HCT116 (cell line): ENCODE measurements at regions of chr9 and their contacts with region 1.

Region 1: GRCh38 chr9:134175808-134176598 is 11.6 kb upstream of the RNU6ATAC start:
- DNase-seq: no peak
- ATAC-seq: no peak
- H3K4me3 ChIP-seq: no peak overlapping the region
- H3K27ac ChIP-seq: no peak overlapping the region; the same call in 1 of the 2 replicates
- H3K4me1 ChIP-seq: peaks cover 8 to 11% of the 10 kb centered on the region in 2 experiments
- H3K27me3 ChIP-seq: no peaks in the 10 kb centered on the region
- CTCF ChIP-seq: no peak
- POLR2A ChIP-seq: no peak
- RAD21 ChIP-seq: no peak

Region 2: DNA sequence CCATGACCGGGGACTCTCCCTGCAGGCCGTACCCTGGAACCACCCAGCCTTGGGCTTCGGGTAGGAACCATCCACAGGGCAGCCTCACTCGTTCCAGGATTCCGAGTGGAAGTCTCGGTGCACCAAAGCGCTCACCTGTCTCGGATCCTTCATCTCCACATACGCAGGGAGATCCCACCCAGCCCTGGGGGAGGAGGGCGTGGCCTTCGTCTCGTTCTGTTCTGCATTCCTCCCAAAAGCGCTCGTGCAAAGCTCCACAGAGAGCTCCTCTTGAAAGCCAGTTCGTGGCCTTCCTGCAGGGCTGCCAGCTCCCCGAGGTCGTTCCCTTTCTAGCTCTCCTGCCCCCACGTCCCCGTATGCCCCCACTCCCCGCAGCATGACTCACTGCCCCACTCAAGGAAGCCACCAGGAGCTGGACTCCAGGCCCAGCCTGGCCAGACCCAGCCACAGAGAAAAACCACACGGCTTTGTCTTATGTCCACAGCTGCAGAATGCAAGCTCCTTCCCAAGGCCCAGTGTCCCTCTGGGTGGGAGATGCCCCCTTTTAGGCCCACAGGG is 372.9 kb before region 1 on chr9:
- CTCF ChIA-PET with region 1: no interaction called
- POLR2A ChIA-PET with region 1: no interaction called
- RAD21 ChIA-PET with region 1: no interaction called
- intact Hi-C with region 1: no loop called
- DNase-seq: no peak
- ATAC-seq: no peak
- H3K4me3 ChIP-seq: no peak overlapping the region
- H3K27ac ChIP-seq: no peak overlapping the region
- H3K4me1 ChIP-seq: no peaks in the 10 kb centered on the region
- H3K27me3 ChIP-seq: no peaks in the 10 kb centered on the region
- CTCF ChIP-seq: no peak
- POLR2A ChIP-seq: no peak
- RAD21 ChIP-seq: no peak

Region 3: DNA sequence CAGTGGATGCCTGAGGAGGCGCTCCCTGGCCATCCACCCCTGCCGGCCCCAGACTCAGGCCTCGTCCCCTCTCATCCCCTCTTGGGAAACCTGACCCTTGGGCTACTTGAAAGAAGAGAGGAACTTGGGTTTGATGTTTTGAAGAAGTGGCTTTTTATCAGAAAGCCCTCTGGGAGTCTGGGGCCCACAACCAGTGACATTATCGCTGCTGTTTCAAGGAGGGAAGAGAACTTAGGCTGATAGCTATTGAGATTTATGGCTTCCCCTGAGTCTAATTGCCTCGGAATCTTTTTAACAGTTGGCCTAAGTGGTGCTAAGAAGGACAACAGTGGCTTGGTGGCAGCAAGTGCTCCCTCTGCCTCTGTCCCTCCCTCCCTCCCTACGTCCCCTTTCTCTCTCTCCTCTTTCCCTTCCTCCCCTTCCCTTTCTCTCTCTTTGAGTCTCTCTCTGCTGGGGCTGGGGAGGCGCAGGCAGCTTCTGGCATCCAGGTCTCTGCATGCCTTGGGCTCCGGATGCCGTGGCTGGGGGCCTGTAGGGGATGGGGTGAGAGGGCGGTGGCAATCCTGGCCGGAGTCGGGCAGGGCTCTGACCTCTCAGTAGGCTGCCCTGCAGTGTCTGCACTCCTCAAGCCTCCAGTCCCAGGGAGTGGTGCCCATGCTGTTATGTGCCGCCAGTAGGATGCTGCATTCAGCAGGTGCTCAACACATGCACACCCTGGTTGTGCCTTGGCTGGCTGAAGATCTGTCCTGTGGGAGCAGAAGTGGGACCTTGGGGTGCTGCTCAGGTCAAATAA is 100.6 kb after region 1 on chr9:
- CTCF ChIA-PET with region 1: no interaction called
- POLR2A ChIA-PET with region 1: no interaction called
- RAD21 ChIA-PET with region 1: no interaction called
- intact Hi-C with region 1: no loop called
- DNase-seq: no peak
- ATAC-seq: no peak
- H3K4me3 ChIP-seq: no peak overlapping the region
- H3K27ac ChIP-seq: no peak overlapping the region
- H3K4me1 ChIP-seq: no peaks in the 10 kb centered on the region
- H3K27me3 ChIP-seq: no peaks in the 10 kb centered on the region
- CTCF ChIP-seq: no peak
- POLR2A ChIP-seq: no peak
- RAD21 ChIP-seq: no peak

Region 4: GRCh38 chr9:134323741-134324358 is 147.8 kb after region 1 on chr9:
- CTCF ChIA-PET with region 1: no interaction called
- POLR2A ChIA-PET with region 1: no interaction called
- RAD21 ChIA-PET with region 1: no interaction called
- intact Hi-C with region 1: loop called (anchors 5 kb)
- DNase-seq: peak; percentile 51
- ATAC-seq: peak; percentile 37
- H3K4me3 ChIP-seq: peak overlapping the region; percentile 9 to 80; a peak in 3 of 4 replicates
- H3K27ac ChIP-seq: peak overlapping the region; percentile 99
- H3K4me1 ChIP-seq: peaks cover 28 to 46% of the 10 kb centered on the region in 2 experiments
- H3K27me3 ChIP-seq: no peaks in the 10 kb centered on the region
- CTCF ChIP-seq: no peak
- POLR2A ChIP-seq: no peak
- RAD21 ChIP-seq: no peak

Region 5: DNA sequence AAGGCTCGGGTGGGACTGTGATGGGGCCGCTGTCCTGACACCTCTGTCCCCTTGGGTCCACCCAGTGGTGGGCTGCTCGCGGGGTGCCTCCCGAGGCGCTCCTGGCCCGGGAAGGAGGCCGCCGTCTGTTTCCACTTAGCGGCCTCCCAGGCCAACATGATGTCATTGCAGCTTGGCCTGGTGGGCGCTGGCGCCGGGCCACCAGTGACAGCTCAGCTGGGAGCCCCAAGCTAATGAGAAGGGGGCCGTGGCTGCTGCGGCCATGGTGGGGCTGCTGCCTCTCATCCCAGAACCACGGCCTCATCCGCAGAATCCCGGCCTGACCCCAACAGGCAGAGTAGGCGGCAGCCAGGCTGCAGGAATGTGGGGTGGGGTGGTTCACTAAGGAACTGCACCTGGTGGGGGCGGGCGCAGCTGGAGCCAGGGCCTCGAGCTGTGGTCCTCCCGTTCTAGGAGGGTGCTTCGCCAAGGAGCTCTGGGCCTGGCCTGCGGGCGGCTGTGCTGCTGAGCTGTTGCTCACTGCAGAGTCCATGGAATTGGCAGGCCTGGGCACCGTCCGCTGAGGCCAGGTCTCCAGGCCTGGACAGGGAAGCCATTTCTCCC is 342.1 kb after region 1 on chr9:
- CTCF ChIA-PET with region 1: no interaction called
- POLR2A ChIA-PET with region 1: no interaction called
- RAD21 ChIA-PET with region 1: no interaction called
- intact Hi-C with region 1: no loop called
- DNase-seq: no peak
- ATAC-seq: no peak
- H3K4me3 ChIP-seq: no peak overlapping the region
- H3K27ac ChIP-seq: no peak overlapping the region
- H3K4me1 ChIP-seq: no peaks in the 10 kb centered on the region
- H3K27me3 ChIP-seq: peaks cover 3% of the 10 kb centered on the region; the same call in 1 of the 2 replicates
- CTCF ChIP-seq: no peak
- POLR2A ChIP-seq: no peak
- RAD21 ChIP-seq: no peak

Region 6: GRCh38 chr9:135490980-135491464 is 1315.0 kb after region 1 on chr9:
- CTCF ChIA-PET with region 1: no interaction called
- POLR2A ChIA-PET with region 1: no interaction called
- RAD21 ChIA-PET with region 1: no interaction called
- intact Hi-C with region 1: no loop called
- DNase-seq: no peak
- ATAC-seq: no peak
- H3K4me3 ChIP-seq: no peak overlapping the region
- H3K27ac ChIP-seq: no peak overlapping the region
- H3K4me1 ChIP-seq: peaks cover 5 to 16% of the 10 kb centered on the region in 2 experiments
- H3K27me3 ChIP-seq: no peaks in the 10 kb centered on the region
- CTCF ChIP-seq: no peak
- POLR2A ChIP-seq: no peak
- RAD21 ChIP-seq: no peak